H1 (cell line): ENCODE measurements at regions of chr22 and their contacts with region 1.

Region 1: DNA sequence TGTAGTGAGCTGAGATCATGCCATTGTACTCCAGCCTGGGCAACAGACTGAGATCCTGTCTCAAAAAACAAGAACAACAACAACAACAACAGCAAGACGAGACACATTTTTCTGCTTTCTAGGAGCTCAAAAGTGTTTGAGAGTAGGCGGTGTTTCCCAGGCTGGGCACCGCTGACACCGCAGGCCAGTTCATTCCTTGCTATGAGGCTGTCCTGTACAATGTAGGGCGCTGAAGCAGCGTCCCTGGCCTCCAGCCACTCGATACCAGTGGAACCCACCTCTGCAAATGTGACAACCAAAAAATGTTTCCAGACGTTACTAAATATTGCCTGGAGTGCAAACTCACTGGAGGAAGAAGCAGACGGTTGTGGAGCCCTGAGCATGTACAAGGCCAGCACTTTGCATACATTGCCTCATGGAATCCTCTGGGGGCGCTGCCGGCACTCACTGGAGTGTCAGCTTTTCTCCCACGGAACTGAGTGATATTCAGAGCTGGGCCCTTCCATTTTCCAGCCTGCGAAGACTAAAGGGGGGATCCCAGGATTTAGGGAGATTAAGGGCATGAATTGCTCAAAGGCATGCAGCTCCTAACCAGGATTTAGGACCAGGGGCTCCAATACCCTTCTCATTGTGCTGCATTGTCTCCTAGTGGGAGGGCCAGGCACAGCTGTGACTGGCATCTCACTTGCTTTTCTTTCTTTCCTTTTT is 5.8 kb upstream of the MIEF1 start:
- DNase-seq: peak in 1 of 2 experiments; percentile 76
- H3K4me3 ChIP-seq: no peak overlapping the region
- H3K27ac ChIP-seq: no peak overlapping the region
- H3K4me1 ChIP-seq: no peaks in the 10 kb centered on the region; a peak in 1 of 7 replicates
- H3K27me3 ChIP-seq: peaks cover 0 to 47% (median 16%) of the 10 kb centered on the region in 4 experiments; a peak in 5 of 7 replicates
- CTCF ChIP-seq: peak; percentile 80 to 90 (median 86)
- EP300 ChIP-seq: no peak
- POLR2A ChIP-seq: no peak
- RAD21 ChIP-seq: peak; percentile 33 to 53; a peak in 3 of 4 replicates

Region 2: GRCh38 chr22:39439170-39439569 is 57.1 kb before region 1 on chr22:
- CTCF ChIA-PET with region 1: interaction called, 10 read pairs
- POLR2A ChIA-PET with region 1: no interaction called
- DNase-seq: no peak
- H3K4me3 ChIP-seq: no peak overlapping the region
- H3K27ac ChIP-seq: no peak overlapping the region
- H3K4me1 ChIP-seq: peaks cover 0 to 8% (median 6%) of the 10 kb centered on the region in 4 experiments; a peak in 3 of 7 replicates
- H3K27me3 ChIP-seq: peaks cover 0 to 3% (median 1%) of the 10 kb centered on the region in 4 experiments; a peak in 2 of 7 replicates
- CTCF ChIP-seq: no peak
- EP300 ChIP-seq: no peak
- POLR2A ChIP-seq: no peak
- RAD21 ChIP-seq: no peak

Region 3: GRCh38 chr22:39462443-39463221 is 33.7 kb before region 1 on chr22:
- CTCF ChIA-PET with region 1: interaction called, 60 read pairs
- POLR2A ChIA-PET with region 1: no interaction called
- DNase-seq: no peak
- H3K4me3 ChIP-seq: no peak overlapping the region
- H3K27ac ChIP-seq: no peak overlapping the region
- H3K4me1 ChIP-seq: peaks cover 0 to 5% (median 0%) of the 10 kb centered on the region in 4 experiments; a peak in 3 of 7 replicates
- H3K27me3 ChIP-seq: peaks cover 1 to 10% (median 7%) of the 10 kb centered on the region in 4 experiments; a peak in 6 of 7 replicates
- CTCF ChIP-seq: peak; percentile 38 to 57 (median 52)
- EP300 ChIP-seq: no peak
- POLR2A ChIP-seq: no peak
- RAD21 ChIP-seq: peak; percentile 73 to 77

Region 4: DNA sequence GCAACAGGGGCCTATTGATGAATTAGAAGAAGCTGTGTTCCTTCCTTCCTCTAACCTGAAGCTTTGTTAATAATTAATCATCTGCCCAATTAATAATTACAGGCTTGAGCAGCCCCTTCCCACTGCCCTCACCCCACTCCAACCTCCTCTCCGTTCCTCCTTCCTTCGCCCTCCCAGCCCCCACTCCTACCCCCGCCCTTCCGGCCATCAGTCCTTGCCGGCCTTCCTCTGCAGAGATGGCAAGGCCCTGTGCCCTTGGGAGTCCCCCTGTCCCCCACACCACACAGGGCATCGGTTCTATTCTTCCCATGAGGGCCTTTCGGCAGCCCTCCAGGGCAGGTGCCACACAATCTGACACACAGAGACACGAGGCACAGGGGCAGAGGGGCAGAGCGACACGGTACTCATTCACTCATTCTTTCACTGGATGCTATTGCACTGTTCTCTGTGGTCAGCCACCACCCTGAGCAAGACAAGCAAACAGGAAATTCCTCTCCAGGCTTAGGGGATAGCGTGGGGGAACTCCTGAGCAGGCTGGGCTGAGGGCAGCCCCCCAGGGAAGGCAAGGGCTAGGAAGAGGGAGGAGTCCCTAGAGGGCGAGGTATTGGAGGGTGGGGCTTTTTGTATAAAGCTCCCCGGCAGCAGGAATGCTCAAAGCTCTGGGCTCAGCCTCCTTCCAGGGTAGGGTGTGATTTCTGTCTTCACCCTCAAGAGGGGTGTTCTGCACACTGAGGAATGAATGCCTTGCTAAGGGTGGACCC is 24.7 kb before region 1 on chr22:
- CTCF ChIA-PET with region 1: interaction called, 120 read pairs
- POLR2A ChIA-PET with region 1: interaction called, 3 read pairs
- DNase-seq: no peak
- H3K4me3 ChIP-seq: no peak overlapping the region; a peak in 1 of 8 replicates
- H3K27ac ChIP-seq: no peak overlapping the region
- H3K4me1 ChIP-seq: peaks cover 16 to 51% (median 39%) of the 10 kb centered on the region in 4 experiments
- H3K27me3 ChIP-seq: no peaks in the 10 kb centered on the region
- CTCF ChIP-seq: no peak
- EP300 ChIP-seq: no peak
- POLR2A ChIP-seq: no peak
- RAD21 ChIP-seq: no peak

Region 5: DNA sequence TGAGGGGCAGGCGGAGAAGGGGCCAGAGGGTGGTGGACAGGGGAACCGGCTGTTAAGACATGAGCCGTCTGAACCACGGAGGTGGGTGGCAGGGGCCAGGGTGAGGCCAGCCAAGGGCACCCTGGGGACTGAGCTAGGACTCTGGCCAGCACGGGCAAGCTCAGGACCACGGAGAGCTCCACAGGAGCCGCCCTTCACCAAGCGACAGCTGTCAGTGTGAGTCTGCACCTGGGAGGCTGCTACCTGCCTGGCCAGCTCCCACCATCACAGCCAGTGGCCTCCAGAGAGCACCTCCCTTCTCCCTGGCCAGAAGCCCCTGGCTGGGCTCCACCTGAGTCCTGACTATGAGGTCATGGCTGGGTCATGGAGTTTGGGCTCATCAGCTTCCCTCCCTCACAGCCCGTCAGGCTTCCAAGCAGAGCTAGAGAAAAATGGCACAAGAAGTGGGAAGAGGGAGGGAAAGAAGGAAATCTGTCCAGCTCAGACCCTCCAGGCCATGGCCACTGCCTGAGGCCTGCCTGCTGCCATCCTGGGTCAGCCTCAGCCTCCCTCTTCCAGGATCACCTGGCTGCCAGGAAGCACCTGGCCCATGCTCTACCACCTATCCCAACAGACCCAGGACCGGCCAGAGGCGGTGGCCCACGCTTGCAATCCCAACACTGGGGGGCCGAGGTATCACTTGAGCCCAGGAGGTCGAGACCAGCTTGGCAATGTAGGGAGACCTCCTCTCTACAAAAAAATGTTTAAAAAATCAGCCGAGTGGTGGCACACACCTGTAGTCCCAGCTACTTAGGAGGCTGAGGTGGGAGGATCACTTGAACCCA is 17.6 kb before region 1 on chr22:
- CTCF ChIA-PET with region 1: interaction called, 120 read pairs
- POLR2A ChIA-PET with region 1: no interaction called
- DNase-seq: peak in 1 of 2 experiments; percentile 85
- H3K4me3 ChIP-seq: no peak overlapping the region
- H3K27ac ChIP-seq: no peak overlapping the region
- H3K4me1 ChIP-seq: peaks cover 4 to 15% (median 9%) of the 10 kb centered on the region in 4 experiments; a peak in 6 of 7 replicates
- H3K27me3 ChIP-seq: no peaks in the 10 kb centered on the region; a peak in 1 of 7 replicates
- CTCF ChIP-seq: no peak
- EP300 ChIP-seq: no peak
- POLR2A ChIP-seq: no peak
- RAD21 ChIP-seq: peak in 1 of 2 experiments; percentile 5; a peak in 1 of 4 replicates

Region 6: GRCh38 chr22:39508393-39508792 is 12.1 kb after region 1 on chr22:
- CTCF ChIA-PET with region 1: interaction called, 278 read pairs
- POLR2A ChIA-PET with region 1: interaction called, 6 read pairs
- DNase-seq: no peak
- H3K4me3 ChIP-seq: no peak overlapping the region
- H3K27ac ChIP-seq: no peak overlapping the region
- H3K4me1 ChIP-seq: peaks cover 0 to 3% (median 0%) of the 10 kb centered on the region in 4 experiments; a peak in 2 of 7 replicates
- H3K27me3 ChIP-seq: peaks cover 38 to 77% (median 75%) of the 10 kb centered on the region in 4 experiments
- CTCF ChIP-seq: no peak
- EP300 ChIP-seq: no peak
- POLR2A ChIP-seq: no peak
- RAD21 ChIP-seq: no peak

Region 7: DNA sequence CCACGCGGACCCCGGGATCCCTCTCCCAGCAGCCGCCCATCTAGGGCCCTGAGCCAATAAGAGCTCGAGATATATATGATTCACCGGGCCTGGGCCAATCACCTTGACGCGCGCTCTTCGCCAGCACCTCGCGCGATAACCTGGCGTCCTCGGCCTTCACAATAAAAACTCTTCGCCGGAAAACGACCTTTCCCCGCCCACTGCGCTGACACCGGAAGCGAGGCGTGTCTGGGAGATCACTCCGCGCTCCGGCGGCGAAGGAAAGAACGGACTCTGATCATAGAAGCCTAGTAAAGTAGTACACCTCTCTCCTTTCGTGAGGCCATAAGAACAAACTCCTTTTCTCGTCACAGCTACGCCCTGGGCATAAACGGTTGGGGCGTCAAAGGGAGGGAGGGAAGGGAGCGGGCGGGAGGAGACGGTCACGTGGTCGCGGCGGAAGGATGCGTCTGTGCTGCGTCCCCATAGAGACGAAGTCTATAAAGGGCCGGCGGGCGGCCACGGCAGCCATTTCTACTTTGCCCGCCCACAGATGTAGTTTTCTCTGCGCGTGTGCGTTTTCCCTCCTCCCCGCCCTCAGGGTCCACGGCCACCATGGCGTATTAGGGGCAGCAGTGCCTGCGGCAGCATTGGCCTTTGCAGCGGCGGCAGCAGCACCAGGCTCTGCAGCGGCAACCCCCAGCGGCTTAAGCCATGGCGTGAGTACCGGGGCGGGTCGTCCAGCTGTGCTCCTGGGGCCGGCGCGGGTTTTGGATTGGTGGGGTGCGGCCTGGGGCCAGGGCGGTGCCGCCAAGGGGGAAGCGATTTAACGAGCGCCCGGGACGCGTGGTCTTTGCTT is 24.0 kb after region 1 on chr22 and contains the start of gene ATF4:
- CTCF ChIA-PET with region 1: interaction called, 361 read pairs
- POLR2A ChIA-PET with region 1: interaction called, 83 read pairs
- DNase-seq: peak; percentile 93 to 96
- H3K4me3 ChIP-seq: peak within 1 kb of the TSS; percentile 93 to 99 (median 95)
- H3K27ac ChIP-seq: peak within 1 kb of the TSS; percentile 99
- H3K4me1 ChIP-seq: peaks cover 0 to 12% (median 5%) of the 10 kb centered on the region in 4 experiments; a peak in 4 of 7 replicates
- H3K27me3 ChIP-seq: peaks cover 0 to 6% (median 2%) of the 10 kb centered on the region in 4 experiments; a peak in 3 of 7 replicates
- CTCF ChIP-seq: no peak
- EP300 ChIP-seq: no peak; a peak in 1 of 3 replicates
- POLR2A ChIP-seq: peak; percentile 96 to 98
- RAD21 ChIP-seq: no peak
- total RNA-seq, gene ATF4: 543 and 553 TPM in 2 replicates